Activated CD4-positive, alpha-beta T cell treated with anti-CD3 and anti-CD28 coated beads, Interleukin-2, amount 10 ng/mL, durations not matched to agents 7 days and 5 days (primary cell): ENCODE measurements at regions of chr1 and their contacts with region 1.

Region 1: GRCh38 chr1:151251656-151252470 is 2.7 kb upstream of the PSMD4 start:
- DNase-seq: peak; percentile 81
- H3K4me3 Mint-ChIP-seq: no peak overlapping the region
- H3K27ac Mint-ChIP-seq: no peak overlapping the region
- H3K4me1 Mint-ChIP-seq: peaks cover 22% of the 10 kb centered on the region
- H3K27me3 Mint-ChIP-seq: no peaks in the 10 kb centered on the region

Region 2: GRCh38 chr1:151227634-151228033 is 24.2 kb before region 1 on chr1:
- CTCF ChIA-PET with region 1: interaction called, 18 read pairs
- POLR2A ChIA-PET with region 1: no interaction called
- DNase-seq: no peak
- H3K4me3 Mint-ChIP-seq: no peak overlapping the region
- H3K27ac Mint-ChIP-seq: no peak overlapping the region
- H3K4me1 Mint-ChIP-seq: peaks cover 1% of the 10 kb centered on the region
- H3K27me3 Mint-ChIP-seq: no peaks in the 10 kb centered on the region

Region 3: GRCh38 chr1:151238467-151238739 is 13.5 kb before region 1 on chr1:
- CTCF ChIA-PET with region 1: interaction called, 20 read pairs
- POLR2A ChIA-PET with region 1: no interaction called
- DNase-seq: no peak
- H3K4me3 Mint-ChIP-seq: no peak overlapping the region
- H3K27ac Mint-ChIP-seq: no peak overlapping the region
- H3K4me1 Mint-ChIP-seq: no peaks in the 10 kb centered on the region
- H3K27me3 Mint-ChIP-seq: no peaks in the 10 kb centered on the region

Region 4: GRCh38 chr1:151281969-151282882 is 30.4 kb after region 1 on chr1 and contains the start of gene ZNF687:
- CTCF ChIA-PET with region 1: interaction called, 10 read pairs
- POLR2A ChIA-PET with region 1: no interaction called
- DNase-seq: peak; percentile 99
- H3K4me3 Mint-ChIP-seq: peak within 1 kb of the TSS; percentile 99
- H3K27ac Mint-ChIP-seq: peak within 1 kb of the TSS; percentile 99
- H3K4me1 Mint-ChIP-seq: peaks cover 24% of the 10 kb centered on the region
- H3K27me3 Mint-ChIP-seq: no peaks in the 10 kb centered on the region
- total RNA-seq, gene ZNF687: 27.4 to 27.7 TPM

Region 5: GRCh38 chr1:151367658-151368392 is 116.0 kb after region 1 on chr1:
- CTCF ChIA-PET with region 1: no interaction called
- POLR2A ChIA-PET with region 1: no interaction called
- DNase-seq: no peak
- H3K4me3 Mint-ChIP-seq: no peak overlapping the region
- H3K27ac Mint-ChIP-seq: no peak overlapping the region
- H3K4me1 Mint-ChIP-seq: no peaks in the 10 kb centered on the region
- H3K27me3 Mint-ChIP-seq: no peaks in the 10 kb centered on the region

Region 6: DNA sequence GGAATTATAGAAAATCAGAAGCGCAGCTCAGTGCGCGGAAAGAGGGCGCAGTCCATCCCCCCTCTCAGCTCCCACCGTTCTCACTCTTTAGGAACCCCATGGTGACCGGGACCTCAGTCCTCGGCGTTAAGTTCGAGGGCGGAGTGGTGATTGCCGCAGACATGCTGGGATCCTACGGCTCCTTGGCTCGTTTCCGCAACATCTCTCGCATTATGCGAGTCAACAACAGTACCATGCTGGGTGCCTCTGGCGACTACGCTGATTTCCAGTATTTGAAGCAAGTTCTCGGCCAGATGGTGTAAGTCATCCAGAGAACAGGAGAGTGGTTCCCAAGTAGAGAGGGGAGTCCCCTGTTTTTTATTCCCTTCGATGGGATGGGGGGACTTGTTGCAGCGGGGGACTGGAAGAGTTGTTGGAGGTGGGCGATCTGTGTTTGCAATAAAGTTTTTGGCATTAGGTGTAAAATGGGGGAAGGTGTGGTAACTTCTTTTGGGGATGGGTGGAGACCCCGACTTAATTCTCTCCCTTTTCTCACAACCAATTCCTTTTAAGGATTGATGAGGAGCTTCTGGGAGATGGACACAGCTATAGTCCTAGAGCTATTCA is 148.1 kb after region 1 on chr1:
- CTCF ChIA-PET with region 1: no interaction called
- POLR2A ChIA-PET with region 1: no interaction called
- DNase-seq: peak; percentile 24
- H3K4me3 Mint-ChIP-seq: peak overlapping the region; percentile 85
- H3K27ac Mint-ChIP-seq: peak overlapping the region; percentile 98
- H3K4me1 Mint-ChIP-seq: peaks cover 27% of the 10 kb centered on the region
- H3K27me3 Mint-ChIP-seq: no peaks in the 10 kb centered on the region

Region 7: GRCh38 chr1:151435160-151435559 is 183.3 kb after region 1 on chr1:
- CTCF ChIA-PET with region 1: no interaction called
- POLR2A ChIA-PET with region 1: no interaction called
- DNase-seq: no peak
- H3K4me3 Mint-ChIP-seq: no peak overlapping the region
- H3K27ac Mint-ChIP-seq: no peak overlapping the region
- H3K4me1 Mint-ChIP-seq: peaks cover 7% of the 10 kb centered on the region
- H3K27me3 Mint-ChIP-seq: no peaks in the 10 kb centered on the region